ENCODE measurements at regions of chr1 and their contacts with region 1.

Region 1: DNA sequence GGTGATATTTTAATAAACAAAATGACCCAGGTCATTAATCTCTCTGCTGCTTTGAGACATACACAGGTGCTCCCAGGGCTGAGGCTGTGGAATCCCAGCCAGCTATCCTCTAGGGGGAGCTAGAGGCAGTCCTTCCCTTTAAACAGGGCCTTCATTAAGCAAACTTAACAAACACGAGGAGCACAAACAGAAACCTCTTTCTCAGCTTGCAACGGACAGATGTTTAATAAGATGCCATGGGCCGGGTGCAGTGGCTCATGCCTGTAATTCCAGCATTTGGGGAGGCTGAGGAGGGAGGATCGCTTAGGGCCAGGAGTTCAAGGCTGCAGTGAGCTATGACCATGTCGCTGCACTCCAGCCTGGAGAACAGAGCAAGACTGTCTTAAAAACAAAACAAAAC is 106.7 kb downstream of the HIVEP3 start:
- DNase-seq: peak; percentile 80
- H3K4me3 Mint-ChIP-seq: no peak overlapping the region
- H3K27ac Mint-ChIP-seq: no peak overlapping the region
- H3K4me1 Mint-ChIP-seq: peaks cover 48% of the 10 kb centered on the region
- H3K27me3 Mint-ChIP-seq: no peaks in the 10 kb centered on the region

Region 2: DNA sequence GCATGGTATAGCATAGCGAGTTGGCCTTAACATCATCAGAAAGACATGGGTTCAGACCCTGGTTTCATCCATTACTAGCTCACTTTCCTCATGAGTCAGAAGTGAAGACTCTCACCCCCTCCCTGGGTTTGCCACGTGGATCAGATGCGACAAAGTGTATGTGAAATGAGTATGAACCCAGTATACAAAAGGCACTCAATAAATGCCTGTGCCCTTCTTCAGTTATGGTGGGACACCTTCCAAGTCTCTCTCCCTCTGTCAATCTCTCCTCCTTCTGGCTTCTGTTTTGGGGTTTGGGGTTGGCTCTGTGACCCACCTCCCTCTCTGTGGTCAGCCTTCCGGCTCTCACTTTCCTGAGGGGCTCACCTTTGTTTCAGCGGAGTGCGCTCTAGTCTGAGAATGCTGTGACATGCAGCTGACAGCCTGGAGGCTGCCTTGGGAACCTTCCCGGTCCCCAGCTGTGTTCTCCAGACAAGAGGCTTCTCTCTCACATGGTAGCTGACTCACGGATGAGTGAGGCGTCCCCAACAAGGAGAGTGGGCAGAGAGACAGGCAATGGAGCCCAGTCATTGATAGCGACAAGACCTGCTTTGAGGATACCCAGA is 172.6 kb before region 1 on chr1:
- CTCF ChIA-PET with region 1: interaction called, 11 read pairs
- POLR2A ChIA-PET with region 1: no interaction called
- intact Hi-C with region 1: loop called (anchors 5 kb)
- DNase-seq: peak; percentile 87
- H3K4me3 Mint-ChIP-seq: peak overlapping the region; percentile 59
- H3K27ac Mint-ChIP-seq: no peak overlapping the region
- H3K4me1 Mint-ChIP-seq: peaks cover 12% of the 10 kb centered on the region
- H3K27me3 Mint-ChIP-seq: no peaks in the 10 kb centered on the region

Region 3: DNA sequence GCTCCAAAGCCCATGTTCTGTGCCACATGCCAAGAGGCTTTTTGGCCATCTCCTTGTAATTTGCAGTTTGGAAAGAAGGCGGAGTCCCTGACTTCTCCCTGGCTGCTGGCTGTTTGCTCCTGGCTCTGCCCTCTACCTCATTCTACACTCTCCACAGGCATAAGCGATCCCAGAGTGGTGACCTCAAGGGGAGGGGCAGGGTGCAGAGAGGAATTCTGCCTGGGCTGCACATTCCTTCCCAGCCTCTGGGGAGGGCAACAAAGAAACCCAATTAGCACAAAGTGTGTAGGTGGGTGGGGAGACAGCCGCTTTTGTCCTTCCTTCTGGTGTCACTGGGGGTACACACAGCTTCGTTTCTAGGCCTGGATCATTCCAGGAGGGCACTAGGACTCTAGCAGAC is 11.4 kb after region 1 on chr1:
- CTCF ChIA-PET with region 1: interaction called, 10 read pairs
- POLR2A ChIA-PET with region 1: no interaction called
- intact Hi-C with region 1: no loop called
- DNase-seq: no peak
- H3K4me3 Mint-ChIP-seq: no peak overlapping the region
- H3K27ac Mint-ChIP-seq: no peak overlapping the region
- H3K4me1 Mint-ChIP-seq: peaks cover 12% of the 10 kb centered on the region
- H3K27me3 Mint-ChIP-seq: no peaks in the 10 kb centered on the region

Region 4: GRCh38 chr1:41842993-41843755 is 31.1 kb after region 1 on chr1:
- CTCF ChIA-PET with region 1: no interaction called
- POLR2A ChIA-PET with region 1: no interaction called
- intact Hi-C with region 1: no loop called
- DNase-seq: no peak
- H3K4me3 Mint-ChIP-seq: no peak overlapping the region
- H3K27ac Mint-ChIP-seq: no peak overlapping the region
- H3K4me1 Mint-ChIP-seq: peaks cover 22% of the 10 kb centered on the region
- H3K27me3 Mint-ChIP-seq: no peaks in the 10 kb centered on the region

Region 5: DNA sequence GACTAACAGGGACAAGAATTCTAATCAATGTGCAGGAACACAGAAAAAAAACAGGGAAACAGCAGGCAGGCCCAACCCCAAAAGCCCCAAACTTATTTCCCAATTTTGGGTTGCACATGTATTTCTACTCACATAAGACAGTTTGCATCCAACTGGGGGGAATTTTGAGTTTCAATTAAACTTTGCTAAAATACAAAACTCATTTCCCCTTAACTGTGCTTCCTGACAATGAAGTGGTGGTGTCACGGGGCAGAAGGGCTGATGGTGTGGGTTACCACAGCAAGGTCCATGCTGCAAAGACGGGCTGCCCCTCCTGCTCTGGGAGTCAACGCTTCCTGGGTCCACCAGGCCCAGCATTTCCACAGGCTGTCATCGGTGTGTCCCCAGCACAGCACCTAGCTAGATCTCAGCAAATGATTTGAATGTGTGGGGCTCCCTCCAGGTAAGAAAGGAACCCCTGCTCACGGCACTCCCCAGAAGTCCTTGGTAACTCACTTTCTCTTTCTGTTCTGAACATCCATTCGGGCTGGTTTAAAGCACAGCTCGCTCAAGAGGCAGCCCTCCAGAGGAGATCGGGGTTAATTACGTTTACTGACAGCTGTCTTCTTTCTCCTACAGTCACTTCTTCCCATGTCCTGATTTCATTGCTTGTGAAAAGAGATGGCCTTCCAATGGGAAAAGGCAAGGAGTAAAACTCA is 79.3 kb after region 1 on chr1:
- CTCF ChIA-PET with region 1: interaction called, 28 read pairs
- POLR2A ChIA-PET with region 1: no interaction called
- intact Hi-C with region 1: no loop called
- DNase-seq: peak; percentile 70
- H3K4me3 Mint-ChIP-seq: peak overlapping the region; percentile 78
- H3K27ac Mint-ChIP-seq: peak overlapping the region; percentile 90
- H3K4me1 Mint-ChIP-seq: peaks cover 44% of the 10 kb centered on the region
- H3K27me3 Mint-ChIP-seq: no peaks in the 10 kb centered on the region

Region 6: GRCh38 chr1:42173155-42173933 is 361.3 kb after region 1 on chr1:
- CTCF ChIA-PET with region 1: interaction called, 30 read pairs
- POLR2A ChIA-PET with region 1: no interaction called
- intact Hi-C with region 1: no loop called
- DNase-seq: peak; percentile 74
- H3K4me3 Mint-ChIP-seq: no peak overlapping the region
- H3K27ac Mint-ChIP-seq: no peak overlapping the region
- H3K4me1 Mint-ChIP-seq: no peaks in the 10 kb centered on the region
- H3K27me3 Mint-ChIP-seq: no peaks in the 10 kb centered on the region

Measured in activated CD4-positive, alpha-beta memory T cell treated with anti-CD3 and anti-CD28 coated beads for 36 hours (primary cell).